Activated CD4-positive, alpha-beta memory T cell treated with anti-CD3 and anti-CD28 coated beads for 36 hours (primary cell): ENCODE measurements at regions of chr1 and their contacts with region 1.

Region 1: DNA sequence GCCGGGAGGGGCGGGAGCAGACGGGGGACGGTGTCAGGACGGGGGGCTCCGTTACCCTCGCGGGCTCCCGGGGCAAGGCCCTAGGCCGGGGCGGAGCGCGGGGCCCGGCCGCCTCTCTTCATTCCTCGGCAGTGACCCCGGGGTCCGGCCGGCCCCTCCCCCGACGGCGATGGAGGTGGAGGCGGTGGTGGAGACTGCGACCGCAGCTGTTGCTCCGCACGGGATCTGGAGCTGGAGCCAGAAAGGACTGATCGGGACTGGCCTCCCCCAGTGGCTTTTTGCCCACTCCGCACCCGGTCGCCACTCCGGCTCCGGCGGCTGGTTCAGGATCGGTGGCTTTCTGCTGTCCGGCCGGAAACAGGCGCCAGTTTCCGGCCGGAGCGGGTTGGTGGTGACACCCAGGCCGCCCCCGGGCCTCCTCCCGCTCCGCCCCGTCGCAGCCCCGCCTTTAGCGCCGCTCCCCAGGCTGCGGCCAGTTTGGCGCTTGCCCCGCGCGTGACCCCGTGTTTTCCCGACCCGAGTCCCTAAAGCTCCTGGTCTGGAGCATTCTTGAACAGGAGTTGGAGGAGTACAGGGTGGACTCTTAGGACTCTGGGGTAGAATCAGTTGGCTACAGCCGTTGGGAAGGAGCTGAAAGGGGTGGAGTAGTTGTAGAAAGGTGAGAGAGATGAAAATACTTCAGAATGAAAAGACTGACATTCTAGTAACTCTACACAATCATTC is at the start of gene OTUD7B:
- DNase-seq: peak; percentile 87
- H3K4me3 Mint-ChIP-seq: peak within 1 kb of the TSS; percentile 99
- H3K27ac Mint-ChIP-seq: peak within 1 kb of the TSS; percentile 98
- H3K4me1 Mint-ChIP-seq: peaks cover 39% of the 10 kb centered on the region
- H3K27me3 Mint-ChIP-seq: no peaks in the 10 kb centered on the region
- total RNA-seq, gene OTUD7B: 23.8 to 24.7 TPM

Region 2: GRCh38 chr1:149937060-149937705 is 73.4 kb before region 1 on chr1:
- CTCF ChIA-PET with region 1: no interaction called
- POLR2A ChIA-PET with region 1: no interaction called
- intact Hi-C with region 1: loop called (anchors 5 kb)
- DNase-seq: no peak
- H3K4me3 Mint-ChIP-seq: no peak overlapping the region
- H3K27ac Mint-ChIP-seq: peak overlapping the region; percentile 25
- H3K4me1 Mint-ChIP-seq: peaks cover 31% of the 10 kb centered on the region
- H3K27me3 Mint-ChIP-seq: no peaks in the 10 kb centered on the region

Region 3: DNA sequence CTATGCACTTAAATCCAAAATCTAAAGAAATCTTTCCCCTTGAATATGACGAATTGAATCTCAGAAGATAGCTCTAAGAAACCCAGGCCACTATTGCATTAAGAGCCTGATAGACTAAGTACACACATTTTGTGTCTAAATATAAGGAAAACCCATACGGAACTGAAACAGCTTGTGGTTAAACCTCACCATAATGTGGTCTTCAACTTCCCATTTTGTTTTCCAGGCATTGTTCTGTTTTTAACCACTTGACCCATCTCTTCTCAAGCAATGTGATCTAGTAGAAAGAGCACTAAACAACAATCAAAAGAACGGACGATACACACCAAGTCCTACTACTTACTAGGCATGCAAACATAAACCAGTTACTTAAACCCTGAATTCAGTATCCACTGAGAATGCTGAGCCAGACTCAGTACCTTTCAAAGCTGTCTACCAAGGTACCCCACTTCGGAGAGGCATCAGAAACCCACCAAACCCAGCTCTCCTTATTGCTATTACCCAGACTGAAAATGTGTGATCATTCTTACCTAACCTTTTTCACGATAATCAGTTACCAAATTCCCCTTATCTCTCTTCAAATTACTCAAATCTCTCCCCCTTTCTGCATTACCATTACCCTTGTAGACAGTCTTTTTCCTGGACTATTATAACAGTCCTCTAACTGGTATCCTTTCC is 12.8 kb before region 1 on chr1:
- CTCF ChIA-PET with region 1: interaction called, 8 read pairs
- POLR2A ChIA-PET with region 1: interaction called, 57 read pairs
- intact Hi-C with region 1: loop called (anchors 1 kb)
- DNase-seq: peak; percentile 29
- H3K4me3 Mint-ChIP-seq: no peak overlapping the region
- H3K27ac Mint-ChIP-seq: peak overlapping the region; percentile 29
- H3K4me1 Mint-ChIP-seq: peaks cover 58% of the 10 kb centered on the region
- H3K27me3 Mint-ChIP-seq: no peaks in the 10 kb centered on the region

Region 4: DNA sequence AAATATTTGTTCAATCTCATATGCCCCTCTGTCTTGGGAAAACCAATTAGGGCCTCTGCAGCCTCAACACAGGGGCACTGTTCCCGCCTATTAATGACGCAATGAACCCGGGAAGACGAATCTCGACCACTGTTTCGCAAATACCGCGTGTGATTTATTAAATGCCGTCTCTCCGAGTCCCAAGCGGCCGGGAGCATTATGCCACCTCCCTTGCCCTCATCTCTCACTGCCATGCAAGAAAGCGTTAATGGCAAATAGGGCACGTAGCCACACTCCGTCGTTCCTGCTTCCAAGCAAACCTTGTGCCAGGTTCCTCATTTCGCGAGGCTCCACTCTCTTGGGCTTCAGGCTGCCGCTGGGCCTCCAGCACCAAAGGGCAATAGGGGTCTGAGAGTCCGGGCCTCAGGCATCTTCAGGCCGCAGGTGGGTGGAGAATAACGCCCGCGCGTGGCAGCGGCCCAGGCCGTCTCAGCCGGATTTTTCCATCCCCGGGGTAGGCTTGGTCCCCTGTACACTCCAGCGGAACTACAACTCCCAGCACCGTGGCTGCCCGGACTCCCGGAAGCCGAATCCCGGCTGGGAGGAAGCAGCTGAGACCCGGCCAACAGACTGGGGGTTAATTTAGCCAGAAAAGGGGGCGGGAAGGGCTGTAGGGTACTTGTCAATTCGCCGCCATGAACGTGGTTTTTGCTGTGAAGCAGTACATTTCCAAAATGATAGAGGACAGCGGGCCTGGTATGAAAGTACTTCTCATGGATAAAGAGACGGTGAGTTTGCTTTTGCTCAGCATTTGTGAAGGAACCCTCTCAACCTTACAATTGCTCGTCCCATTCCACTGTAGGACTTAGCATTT is 56.9 kb after region 1 on chr1 and contains the start of gene VPS45:
- CTCF ChIA-PET with region 1: interaction called, 9 read pairs
- POLR2A ChIA-PET with region 1: no interaction called
- intact Hi-C with region 1: loop called (anchors 5 kb)
- DNase-seq: peak; percentile 92
- H3K4me3 Mint-ChIP-seq: peak within 1 kb of the TSS; percentile 94
- H3K27ac Mint-ChIP-seq: peak within 1 kb of the TSS; percentile 96
- H3K4me1 Mint-ChIP-seq: peaks cover 33% of the 10 kb centered on the region
- H3K27me3 Mint-ChIP-seq: no peaks in the 10 kb centered on the region
- total RNA-seq, gene VPS45: 26.5 to 28.3 TPM

Region 5: DNA sequence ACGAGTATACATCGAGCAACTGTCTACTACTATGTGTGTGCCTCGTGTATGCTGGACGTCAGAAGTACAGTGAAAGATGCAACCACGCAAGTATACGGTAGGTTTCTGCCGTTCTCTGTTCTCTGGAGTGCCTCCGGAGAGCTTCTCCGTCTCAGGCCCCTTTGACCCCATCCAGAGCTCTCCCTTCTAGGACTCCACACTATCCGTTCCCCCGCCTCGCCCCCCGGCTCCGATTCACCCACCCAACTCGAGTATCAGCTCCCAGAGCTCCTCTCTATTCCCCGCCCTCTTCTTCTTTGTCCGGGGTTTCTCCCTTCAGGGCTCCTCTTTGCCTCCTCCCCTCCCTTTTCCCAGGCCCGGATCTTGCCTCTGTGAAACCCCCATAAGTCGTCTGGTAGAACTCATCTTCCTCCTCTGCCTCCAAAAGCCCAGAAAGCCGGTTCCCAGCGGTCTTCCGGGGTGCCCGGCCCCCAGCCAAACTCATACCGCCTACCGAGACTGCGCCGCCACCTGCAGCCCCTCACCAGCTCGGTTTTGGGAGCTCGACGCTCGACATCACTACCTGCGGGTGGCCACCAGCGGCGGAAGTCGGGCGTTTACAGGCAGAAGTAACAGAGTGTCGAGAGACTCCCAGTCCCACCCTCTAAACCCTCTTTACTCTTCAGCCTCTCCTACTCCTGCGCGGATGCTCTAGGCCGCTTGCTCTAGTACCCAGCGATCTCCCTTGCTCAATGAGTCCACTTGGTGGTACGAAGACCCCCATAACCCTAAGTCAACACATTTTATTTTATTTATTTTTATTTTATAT is 1179.3 kb after region 1 on chr1 and contains the start of gene VPS72:
- CTCF ChIA-PET with region 1: no interaction called
- POLR2A ChIA-PET with region 1: no interaction called
- intact Hi-C with region 1: no loop called
- DNase-seq: peak; percentile 93
- H3K4me3 Mint-ChIP-seq: peak within 1 kb of the TSS; percentile 97
- H3K27ac Mint-ChIP-seq: peak within 1 kb of the TSS; percentile 94
- H3K4me1 Mint-ChIP-seq: peaks cover 22% of the 10 kb centered on the region
- H3K27me3 Mint-ChIP-seq: no peaks in the 10 kb centered on the region
- total RNA-seq, gene VPS72: 77.6 to 80.4 TPM